Sigmoid colon (tissue), 7 donors: ENCODE measurements at regions of chr10 and their contacts with region 1.

Region 1: DNA sequence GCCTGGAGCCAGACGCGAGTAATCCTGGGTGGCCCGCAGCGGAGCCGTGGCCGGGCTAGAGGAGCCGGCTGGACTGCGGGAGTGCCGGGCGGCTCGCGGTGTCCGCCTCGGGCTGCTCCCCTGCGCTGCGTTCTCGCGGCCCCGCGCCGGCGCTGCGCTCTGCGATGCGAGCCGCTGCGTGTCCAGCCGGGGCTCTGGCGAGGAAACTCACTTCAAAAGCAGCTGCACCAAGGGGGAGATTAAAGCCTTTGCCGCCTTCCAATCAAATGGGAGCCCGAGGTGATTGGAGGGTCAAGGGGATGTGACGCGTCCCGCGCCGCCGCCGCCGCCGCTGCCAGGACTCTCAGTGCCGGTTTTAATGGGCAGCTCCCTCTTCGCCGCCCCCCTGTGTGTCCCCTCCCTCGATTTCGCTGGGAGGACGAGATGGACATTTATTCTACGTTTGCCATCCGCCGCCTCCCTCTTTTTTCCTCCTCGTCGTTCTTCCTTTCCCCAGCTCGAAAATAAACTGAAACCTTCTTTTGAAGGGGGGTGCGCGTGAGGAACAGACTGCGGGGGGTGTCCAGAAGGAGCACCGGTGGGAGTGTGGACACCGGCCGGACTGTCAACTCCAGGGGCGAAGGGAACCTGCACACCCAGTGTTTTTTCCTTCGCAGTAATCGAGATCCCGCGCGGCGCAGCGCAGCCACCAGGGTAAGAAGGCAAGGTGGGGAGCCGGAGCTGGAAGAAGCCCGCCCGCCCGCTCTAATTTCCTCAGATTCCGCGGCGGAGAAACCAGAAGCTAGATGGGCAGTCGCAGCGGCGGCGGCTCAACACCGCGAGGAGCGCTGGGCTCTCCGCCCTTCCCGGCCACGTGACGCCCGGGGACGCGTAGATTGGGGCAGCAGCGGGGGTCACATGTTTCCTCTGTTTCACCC is at the start of gene ZNF503:
- DNase-seq: peak; percentile 99
- H3K4me3 ChIP-seq: peak within 1 kb of the TSS; percentile 76 to 97 (median 92)
- H3K27ac ChIP-seq: peak within 1 kb of the TSS; percentile 93 to 99 (median 98)
- H3K4me1 ChIP-seq: peaks cover 0 to 38% (median 29%) of the 10 kb centered on the region in 4 donors
- H3K27me3 ChIP-seq: no peaks in the 10 kb centered on the region
- CTCF ChIP-seq: peak; percentile 15 to 66 (median 46)
- EP300 ChIP-seq: peak in 2 of 4 donors; percentile 60 to 69
- POLR2A ChIP-seq: peak; percentile 65 to 80
- total RNA-seq, gene ZNF503: 10.0 to 20.3 (median 18.2) TPM

Region 2: GRCh38 chr10:75283671-75284470 is 118.0 kb before region 1 on chr10:
- intact Hi-C with region 1: no loop called
- DNase-seq: no peak
- H3K4me3 ChIP-seq: no peak overlapping the region
- H3K27ac ChIP-seq: peak overlapping the region; percentile 39 to 57 (median 44)
- H3K4me1 ChIP-seq: peaks cover 0 to 17% (median 15%) of the 10 kb centered on the region in 4 donors
- H3K27me3 ChIP-seq: no peaks in the 10 kb centered on the region
- CTCF ChIP-seq: no peak
- EP300 ChIP-seq: no peak
- POLR2A ChIP-seq: no peak

Region 3: DNA sequence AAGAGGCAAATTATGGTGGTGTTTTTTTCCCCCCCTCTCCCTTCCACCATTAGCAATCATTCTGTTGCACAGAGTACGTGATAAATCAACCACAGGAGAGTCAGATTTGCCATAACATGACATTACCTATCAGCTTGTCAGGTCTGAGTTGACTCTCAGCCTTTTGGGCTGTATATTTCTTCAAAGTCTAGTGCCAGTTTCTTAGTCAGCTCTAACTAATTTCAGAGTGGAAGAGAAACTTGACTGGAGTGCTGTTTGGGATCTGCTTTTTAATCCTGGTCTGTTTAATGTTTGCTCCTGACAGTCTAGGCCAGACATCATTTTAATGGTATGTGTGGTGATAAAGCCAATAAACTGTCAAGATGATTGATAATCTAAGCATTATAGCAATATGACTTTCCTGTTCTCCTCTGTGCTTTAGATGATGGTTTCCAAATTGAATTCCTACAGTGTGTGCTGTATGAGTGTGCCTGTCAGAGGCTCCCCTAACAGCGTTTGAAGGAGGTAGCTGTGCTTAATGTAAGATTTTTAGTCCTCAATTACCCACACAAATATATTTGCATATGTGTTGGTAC is 106.5 kb after region 1 on chr10:
- intact Hi-C with region 1: loop called (anchors 1 kb)
- DNase-seq: no peak
- H3K4me3 ChIP-seq: no peak overlapping the region
- H3K27ac ChIP-seq: peak overlapping the region; percentile 67 to 80 (median 74)
- H3K4me1 ChIP-seq: peaks cover 0 to 59% (median 45%) of the 10 kb centered on the region in 4 donors
- H3K27me3 ChIP-seq: no peaks in the 10 kb centered on the region
- CTCF ChIP-seq: no peak
- EP300 ChIP-seq: peak in 3 of 4 donors; percentile 84 to 90 (median 89)
- POLR2A ChIP-seq: no peak

Region 4: DNA sequence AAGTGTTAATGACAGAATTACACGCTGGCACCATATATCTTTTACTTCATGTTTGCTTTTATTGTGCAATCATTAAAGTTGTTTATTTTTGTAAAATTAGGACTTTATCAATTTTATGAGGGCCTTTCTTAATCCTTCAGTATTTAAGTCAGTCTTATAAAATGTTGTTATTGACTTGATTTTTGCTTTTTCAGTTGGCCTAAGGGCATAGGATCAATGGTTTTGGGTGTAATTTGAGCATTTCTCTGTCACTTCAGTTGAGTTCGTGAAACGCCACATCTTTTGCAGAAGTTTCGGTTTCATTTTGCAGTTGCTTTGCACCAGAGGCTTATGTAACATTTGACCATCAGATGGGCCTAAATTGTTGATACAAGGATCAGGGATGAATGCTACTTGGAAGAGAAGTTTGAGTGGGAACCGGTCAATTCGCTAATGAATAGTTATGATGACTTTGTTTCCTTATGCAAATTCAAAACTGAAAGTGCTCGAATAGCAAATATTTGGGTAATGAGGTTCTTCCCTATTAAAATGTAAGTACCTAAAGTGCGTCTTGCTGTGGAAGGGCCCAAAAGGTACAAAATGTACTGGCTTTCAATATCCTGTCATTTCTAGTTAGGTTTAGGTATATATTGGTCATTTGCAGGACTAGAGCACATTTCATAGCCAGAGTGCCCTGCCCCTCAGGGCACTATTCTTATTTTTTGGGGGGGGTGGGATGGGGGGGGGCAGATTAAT is 370.5 kb after region 1 on chr10:
- intact Hi-C with region 1: loop called (anchors 5 kb)
- DNase-seq: no peak
- H3K4me3 ChIP-seq: peak overlapping the region in 2 of 4 donors; percentile 17 to 24
- H3K27ac ChIP-seq: peak overlapping the region in 3 of 4 donors; percentile 15 to 47 (median 36)
- H3K4me1 ChIP-seq: peaks cover 0 to 16% (median 9%) of the 10 kb centered on the region in 4 donors
- H3K27me3 ChIP-seq: no peaks in the 10 kb centered on the region
- CTCF ChIP-seq: no peak
- EP300 ChIP-seq: no peak
- POLR2A ChIP-seq: no peak

Region 5: DNA sequence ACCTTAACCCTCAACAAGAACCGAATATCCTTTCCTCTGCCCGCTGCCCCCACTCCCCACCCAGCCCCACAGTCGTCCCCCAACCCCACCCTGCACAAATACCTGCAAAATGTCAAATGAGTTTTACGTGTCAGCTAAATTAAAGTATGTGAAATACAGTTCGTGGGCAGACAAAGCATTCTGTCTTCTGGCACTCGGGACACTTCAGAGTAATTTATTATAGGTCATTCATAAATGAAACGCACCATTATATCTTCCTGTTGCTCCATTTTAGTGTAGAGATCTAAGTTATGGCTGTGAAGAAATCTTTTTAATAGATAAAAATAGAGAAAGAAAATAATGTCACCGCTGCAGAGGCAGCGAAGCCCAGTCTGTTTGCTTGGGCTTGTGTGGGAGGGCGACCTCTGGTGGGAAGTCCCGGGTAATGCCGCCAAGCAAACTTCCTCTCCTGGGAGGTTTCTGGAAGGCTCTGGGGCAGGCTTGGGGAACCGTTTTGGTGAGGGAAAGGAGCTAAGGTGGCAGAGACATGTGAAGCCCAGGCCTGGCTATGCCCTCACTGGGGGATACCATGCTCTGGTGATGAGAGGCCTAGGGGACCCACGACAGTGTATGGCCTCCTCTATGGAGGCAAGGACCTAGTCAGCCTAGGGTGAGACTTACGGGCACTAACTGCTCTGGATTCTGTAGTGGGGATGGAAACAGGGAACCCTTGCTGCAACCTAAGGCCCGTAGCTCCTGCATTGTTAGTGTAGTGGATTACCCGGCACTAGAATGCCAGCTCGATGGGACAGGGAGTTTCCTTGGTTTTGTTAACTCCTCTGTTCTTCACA is 634.5 kb after region 1 on chr10:
- intact Hi-C with region 1: loop called (anchors 2 kb)
- DNase-seq: peak; percentile 90
- H3K4me3 ChIP-seq: peak overlapping the region in 3 of 4 donors; percentile 8 to 19 (median 14)
- H3K27ac ChIP-seq: peak overlapping the region; percentile 46 to 58 (median 53)
- H3K4me1 ChIP-seq: peaks cover 2 to 37% (median 25%) of the 10 kb centered on the region in 4 donors
- H3K27me3 ChIP-seq: no peaks in the 10 kb centered on the region
- CTCF ChIP-seq: peak; percentile 80 to 97 (median 90)
- EP300 ChIP-seq: no peak
- POLR2A ChIP-seq: no peak

Region 6: GRCh38 chr10:76547352-76547972 is 1145.6 kb after region 1 on chr10:
- intact Hi-C with region 1: loop called (anchors 2 kb)
- DNase-seq: peak; percentile 89
- H3K4me3 ChIP-seq: no peak overlapping the region
- H3K27ac ChIP-seq: no peak overlapping the region
- H3K4me1 ChIP-seq: peaks cover 0 to 78% (median 55%) of the 10 kb centered on the region in 4 donors
- H3K27me3 ChIP-seq: no peaks in the 10 kb centered on the region
- CTCF ChIP-seq: peak; percentile 67 to 84 (median 76)
- EP300 ChIP-seq: no peak
- POLR2A ChIP-seq: no peak